ENCODE measurements at regions of chr1 and their contacts with region 1.

Region 1: DNA sequence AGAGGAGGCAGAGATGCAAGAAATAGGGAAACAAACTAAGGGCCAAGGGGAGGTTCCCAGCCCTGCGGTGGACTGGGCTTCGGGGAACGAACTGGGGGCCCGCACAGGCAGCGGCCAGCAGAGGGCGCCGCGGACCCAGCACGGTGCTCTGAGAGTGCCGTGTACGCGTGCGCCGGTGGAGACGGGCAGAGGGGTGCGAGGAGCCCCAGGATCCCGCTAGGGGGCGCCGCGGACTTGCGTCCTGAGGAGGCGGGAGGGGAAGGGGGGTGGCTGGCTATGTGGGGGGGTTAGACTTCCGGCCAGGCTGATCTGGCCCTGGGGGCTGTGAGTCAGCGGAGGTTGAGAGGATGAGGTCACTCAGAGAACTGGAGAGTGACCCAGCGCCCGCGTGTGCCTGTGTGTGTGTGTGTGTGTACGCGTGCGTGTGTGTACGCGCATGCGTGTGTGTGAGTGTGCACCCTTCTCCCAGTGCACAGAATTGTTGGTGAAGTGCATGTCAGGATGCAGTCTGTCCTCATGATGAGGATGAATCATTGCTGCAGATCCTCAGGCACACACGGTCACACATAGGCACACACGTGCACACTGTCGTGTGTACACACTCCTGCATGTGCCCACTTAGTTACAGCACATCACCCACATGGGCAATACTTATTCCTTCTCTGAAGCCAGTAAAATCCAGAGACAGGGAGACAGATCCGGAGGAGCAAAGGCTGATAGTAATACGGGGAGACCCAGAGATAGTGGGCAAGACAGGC is 17.0 kb downstream of the NES start:
- DNase-seq: peak; percentile 99
- H3K4me3 Mint-ChIP-seq: peak overlapping the region; percentile 87
- H3K27ac Mint-ChIP-seq: peak overlapping the region; percentile 88
- H3K4me1 Mint-ChIP-seq: peaks cover 77% of the 10 kb centered on the region
- H3K27me3 Mint-ChIP-seq: no peaks in the 10 kb centered on the region
- CTCF ChIP-seq: peak; percentile 98

Region 2: GRCh38 chr1:156677616-156678596 is 17.7 kb after region 1 on chr1:
- CTCF ChIA-PET with region 1: interaction called, 45 read pairs
- intact Hi-C with region 1: loop called (anchors 1 kb)
- DNase-seq: peak; percentile 70
- H3K4me3 Mint-ChIP-seq: peak overlapping the region; percentile 64
- H3K27ac Mint-ChIP-seq: peak overlapping the region; percentile 5
- H3K4me1 Mint-ChIP-seq: peaks cover 14% of the 10 kb centered on the region
- H3K27me3 Mint-ChIP-seq: peaks cover 71% of the 10 kb centered on the region
- CTCF ChIP-seq: peak; percentile 88